ENCODE measurements at regions of chrX and their contacts with region 1.

Region 1: GRCh38 chrX:31423609-31424189 is 351.9 kb upstream of the FTHL17 start:
- DNase-seq: peak; percentile 62
- ATAC-seq: peak; percentile 69
- H3K4me3 ChIP-seq: peak overlapping the region; percentile 11; the same call in 1 of the 2 replicates
- H3K27ac ChIP-seq: peak overlapping the region; percentile 49; the same call in 1 of the 2 replicates
- H3K4me1 ChIP-seq: no peaks in the 10 kb centered on the region
- H3K27me3 ChIP-seq: no peaks in the 10 kb centered on the region
- CTCF ChIP-seq: peak; percentile 50
- POLR2A ChIP-seq: no peak
- RAD21 ChIP-seq: peak; percentile 40

Region 2: DNA sequence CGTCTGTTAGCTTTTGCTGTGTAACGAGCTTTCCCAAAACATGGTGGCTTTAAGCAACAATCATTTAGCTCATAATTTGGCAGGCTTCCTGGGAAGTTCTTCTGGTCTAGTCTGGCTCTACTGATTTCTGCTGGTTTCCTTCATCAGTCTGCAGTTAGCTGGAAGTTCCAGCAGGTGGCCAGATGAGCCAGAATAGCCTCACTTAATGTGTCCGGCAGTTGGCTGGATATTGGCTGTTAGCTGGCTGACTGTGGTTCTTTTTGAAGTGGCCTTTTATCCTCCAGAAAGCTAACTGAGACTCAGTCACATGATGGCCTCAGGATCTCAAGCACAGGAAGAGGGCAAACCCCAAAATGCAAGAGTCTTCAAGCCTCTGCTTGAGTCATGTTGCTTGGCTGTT is 386.8 kb before region 1 on chrX:
- CTCF ChIA-PET with region 1: no interaction called
- POLR2A ChIA-PET with region 1: no interaction called
- dilution Hi-C with region 1: no loop called
- in situ Hi-C with region 1: no loop called
- intact Hi-C with region 1: loop called (anchors 2 kb)
- DNase-seq: peak; percentile 42
- ATAC-seq: peak; percentile 86
- H3K4me3 ChIP-seq: no peak overlapping the region
- H3K27ac ChIP-seq: no peak overlapping the region
- H3K4me1 ChIP-seq: no peaks in the 10 kb centered on the region
- H3K27me3 ChIP-seq: no peaks in the 10 kb centered on the region
- CTCF ChIP-seq: peak; percentile 61
- POLR2A ChIP-seq: no peak
- RAD21 ChIP-seq: peak; percentile 61

Region 3: GRCh38 chrX:31213941-31214340 is 209.8 kb before region 1 on chrX:
- CTCF ChIA-PET with region 1: interaction called, 3 read pairs
- POLR2A ChIA-PET with region 1: no interaction called
- dilution Hi-C with region 1: no loop called
- in situ Hi-C with region 1: no loop called
- intact Hi-C with region 1: loop called (anchors 1 kb)
- DNase-seq: peak; percentile 19
- ATAC-seq: no peak
- H3K4me3 ChIP-seq: no peak overlapping the region
- H3K27ac ChIP-seq: no peak overlapping the region
- H3K4me1 ChIP-seq: peaks cover 4% of the 10 kb centered on the region; the same call in 1 of the 2 replicates
- H3K27me3 ChIP-seq: no peaks in the 10 kb centered on the region
- CTCF ChIP-seq: peak; percentile 57
- POLR2A ChIP-seq: no peak
- RAD21 ChIP-seq: peak; percentile 61

Region 4: GRCh38 chrX:31266172-31267076 is 157.3 kb before region 1 on chrX:
- CTCF ChIA-PET with region 1: no interaction called
- POLR2A ChIA-PET with region 1: no interaction called
- dilution Hi-C with region 1: no loop called
- in situ Hi-C with region 1: no loop called
- intact Hi-C with region 1: loop called (anchors 10 kb)
- DNase-seq: no peak
- ATAC-seq: peak; percentile 94
- H3K4me3 ChIP-seq: peak overlapping the region; percentile 99
- H3K27ac ChIP-seq: peak overlapping the region; percentile 69; the same call in 1 of the 2 replicates
- H3K4me1 ChIP-seq: no peaks in the 10 kb centered on the region
- H3K27me3 ChIP-seq: peaks cover 3% of the 10 kb centered on the region
- CTCF ChIP-seq: no peak
- POLR2A ChIP-seq: no peak
- RAD21 ChIP-seq: no peak

Region 5: DNA sequence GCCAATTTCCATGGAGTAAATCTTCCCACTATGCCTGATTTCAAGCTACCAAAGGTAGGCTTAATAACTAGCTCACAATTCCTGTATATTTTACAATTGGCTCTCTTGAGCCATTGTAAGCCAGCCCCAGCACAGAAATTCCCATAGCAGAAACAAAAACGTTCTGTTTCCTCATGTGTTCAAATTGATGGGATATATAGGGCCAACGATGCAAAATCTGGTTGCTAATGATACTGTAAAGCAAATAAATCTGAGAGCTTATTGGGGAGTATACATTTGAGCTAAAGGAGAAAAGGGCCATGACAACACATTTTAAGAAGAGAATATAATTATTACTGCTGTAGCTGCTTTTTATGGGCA is 84.7 kb before region 1 on chrX:
- CTCF ChIA-PET with region 1: no interaction called
- POLR2A ChIA-PET with region 1: interaction called, 10 read pairs
- dilution Hi-C with region 1: no loop called
- in situ Hi-C with region 1: no loop called
- intact Hi-C with region 1: no loop called
- DNase-seq: no peak
- ATAC-seq: no peak
- H3K4me3 ChIP-seq: no peak overlapping the region
- H3K27ac ChIP-seq: no peak overlapping the region
- H3K4me1 ChIP-seq: no peaks in the 10 kb centered on the region
- H3K27me3 ChIP-seq: no peaks in the 10 kb centered on the region
- CTCF ChIP-seq: no peak
- POLR2A ChIP-seq: no peak
- RAD21 ChIP-seq: no peak

Region 6: GRCh38 chrX:31658360-31658759 is 234.7 kb after region 1 on chrX:
- CTCF ChIA-PET with region 1: interaction called, 3 read pairs
- POLR2A ChIA-PET with region 1: no interaction called
- dilution Hi-C with region 1: no loop called
- in situ Hi-C with region 1: no loop called
- intact Hi-C with region 1: loop called (anchors 5 kb)
- DNase-seq: peak; percentile 49
- ATAC-seq: no peak
- H3K4me3 ChIP-seq: no peak overlapping the region
- H3K27ac ChIP-seq: no peak overlapping the region
- H3K4me1 ChIP-seq: no peaks in the 10 kb centered on the region
- H3K27me3 ChIP-seq: no peaks in the 10 kb centered on the region; the same call in 1 of the 2 replicates
- CTCF ChIP-seq: peak; percentile 63
- POLR2A ChIP-seq: no peak
- RAD21 ChIP-seq: peak; percentile 67